ENCODE measurements at regions of chr6 and their contacts with region 1.

Region 1: DNA sequence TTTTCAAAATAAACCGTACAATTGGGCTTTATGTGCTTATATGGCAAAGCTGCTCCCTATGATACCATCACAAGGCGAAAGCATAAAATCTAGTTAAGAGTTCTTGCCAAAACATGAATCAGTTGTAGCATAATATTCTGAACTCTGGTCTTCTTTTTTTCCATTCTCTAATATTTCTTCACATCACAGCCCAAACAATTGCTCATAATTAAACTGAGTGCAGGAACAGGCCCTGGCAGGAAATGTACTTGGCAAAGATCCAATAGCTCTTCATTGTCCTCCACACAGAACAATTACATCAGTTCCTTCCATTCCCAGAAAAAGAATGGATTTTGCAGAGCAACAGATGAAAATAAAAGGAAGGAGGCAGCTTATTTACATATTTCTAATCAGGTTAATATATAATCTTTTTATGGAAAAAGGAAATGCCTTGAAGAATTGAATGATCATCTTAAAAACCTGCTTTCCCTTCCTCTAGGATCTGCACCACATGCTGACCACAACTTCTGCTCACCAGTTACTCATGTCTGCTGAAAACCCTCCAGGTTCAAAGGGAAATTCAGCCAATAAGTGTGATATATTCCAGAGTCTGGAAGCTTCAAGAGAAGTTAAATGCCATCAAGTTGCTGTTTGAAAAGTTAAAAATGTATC is 123.3 kb upstream of the COL21A1 start:
- DNase-seq: peak; percentile 52
- H3K4me3 ChIP-seq: no peak overlapping the region
- H3K27me3 ChIP-seq: no peaks in the 10 kb centered on the region
- CTCF ChIP-seq: no peak

Region 2: GRCh38 chr6:56292505-56293181 is 78.0 kb before region 1 on chr6:
- CTCF ChIA-PET with region 1: no interaction called
- POLR2A ChIA-PET with region 1: no interaction called
- DNase-seq: no peak
- H3K4me3 ChIP-seq: no peak overlapping the region
- H3K27me3 ChIP-seq: no peaks in the 10 kb centered on the region
- CTCF ChIP-seq: peak; percentile 55

Region 3: DNA sequence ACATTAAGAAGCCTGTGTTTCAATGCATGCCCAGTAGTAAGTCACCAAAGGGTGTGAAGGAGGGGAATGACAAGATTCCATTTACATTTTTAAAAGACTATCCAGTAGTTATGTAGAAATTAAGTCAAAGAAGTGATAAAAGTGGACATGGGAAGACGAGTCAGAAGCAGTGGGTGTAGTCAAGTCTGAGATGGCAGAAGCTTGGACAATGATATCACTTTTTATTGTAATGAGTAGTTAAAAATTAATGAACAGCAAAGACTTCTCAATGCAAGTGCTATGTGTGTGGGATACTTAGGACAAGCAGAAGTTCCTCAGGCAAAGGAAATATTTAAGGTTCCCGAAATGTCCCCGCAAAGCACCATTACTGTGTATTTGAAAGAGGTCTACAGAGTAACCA is 116.0 kb after region 1 on chr6:
- CTCF ChIA-PET with region 1: no interaction called
- POLR2A ChIA-PET with region 1: no interaction called
- DNase-seq: no peak
- H3K4me3 ChIP-seq: no peak overlapping the region
- H3K27me3 ChIP-seq: no peaks in the 10 kb centered on the region
- CTCF ChIP-seq: no peak

Region 4: DNA sequence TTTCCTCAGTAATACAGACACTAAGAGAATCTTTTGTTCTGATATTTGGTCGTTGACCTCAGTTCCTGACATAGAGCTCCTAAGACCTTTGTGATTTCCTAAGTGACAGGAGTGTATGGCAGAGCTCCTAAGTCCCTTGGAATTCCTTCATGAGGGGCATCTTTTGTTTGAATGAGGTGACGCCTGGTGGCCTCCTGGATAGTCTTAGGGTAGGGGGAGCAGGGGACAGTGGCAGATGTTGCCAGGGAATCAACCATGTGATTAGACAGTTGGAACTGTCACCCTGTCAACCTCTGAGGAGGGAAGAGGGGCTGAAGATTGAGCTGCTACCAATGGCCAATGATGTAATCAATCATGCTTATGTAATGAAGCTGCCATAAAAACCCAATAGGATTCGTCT is 205.1 kb after region 1 on chr6:
- CTCF ChIA-PET with region 1: interaction called, 12 read pairs
- POLR2A ChIA-PET with region 1: no interaction called
- DNase-seq: no peak
- H3K4me3 ChIP-seq: no peak overlapping the region
- H3K27me3 ChIP-seq: no peaks in the 10 kb centered on the region
- CTCF ChIP-seq: no peak